Transverse colon (tissue), 4 donors: ENCODE measurements at regions of chr9 and their contacts with region 1.

Region 1: GRCh38 chr9:125558453-125559092 is 148.4 kb downstream of the MAPKAP1 start:
- DNase-seq: peak; percentile 63
- H3K4me3 ChIP-seq: no peak overlapping the region
- H3K27ac ChIP-seq: peak overlapping the region in 1 of 4 donors; percentile 33
- H3K4me1 ChIP-seq: peaks cover 0 to 6% (median 1%) of the 10 kb centered on the region in 4 donors
- H3K27me3 ChIP-seq: no peaks in the 10 kb centered on the region
- CTCF ChIP-seq: peak; percentile 69 to 84 (median 77)
- EP300 ChIP-seq: no peak
- POLR2A ChIP-seq: no peak

Region 2: GRCh38 chr9:124008694-124009530 is 1549.7 kb before region 1 on chr9:
- in situ Hi-C with region 1: no loop called
- intact Hi-C with region 1: no loop called
- DNase-seq: no peak
- H3K4me3 ChIP-seq: no peak overlapping the region
- H3K27ac ChIP-seq: no peak overlapping the region
- H3K4me1 ChIP-seq: peaks cover 9 to 44% (median 33%) of the 10 kb centered on the region in 4 donors
- H3K27me3 ChIP-seq: peaks cover 100% of the 10 kb centered on the region
- CTCF ChIP-seq: no peak
- EP300 ChIP-seq: no peak
- POLR2A ChIP-seq: no peak

Region 3: GRCh38 chr9:125631391-125632085 is 73.0 kb after region 1 on chr9:
- in situ Hi-C with region 1: loop called in 1 of 4 experiments (anchors 10 kb)
- intact Hi-C with region 1: no loop called
- DNase-seq: peak; percentile 20
- H3K4me3 ChIP-seq: no peak overlapping the region
- H3K27ac ChIP-seq: no peak overlapping the region
- H3K4me1 ChIP-seq: peaks cover 17 to 34% (median 24%) of the 10 kb centered on the region in 4 donors
- H3K27me3 ChIP-seq: no peaks in the 10 kb centered on the region
- CTCF ChIP-seq: peak; percentile 50 to 78 (median 60)
- EP300 ChIP-seq: no peak
- POLR2A ChIP-seq: no peak

Region 4: DNA sequence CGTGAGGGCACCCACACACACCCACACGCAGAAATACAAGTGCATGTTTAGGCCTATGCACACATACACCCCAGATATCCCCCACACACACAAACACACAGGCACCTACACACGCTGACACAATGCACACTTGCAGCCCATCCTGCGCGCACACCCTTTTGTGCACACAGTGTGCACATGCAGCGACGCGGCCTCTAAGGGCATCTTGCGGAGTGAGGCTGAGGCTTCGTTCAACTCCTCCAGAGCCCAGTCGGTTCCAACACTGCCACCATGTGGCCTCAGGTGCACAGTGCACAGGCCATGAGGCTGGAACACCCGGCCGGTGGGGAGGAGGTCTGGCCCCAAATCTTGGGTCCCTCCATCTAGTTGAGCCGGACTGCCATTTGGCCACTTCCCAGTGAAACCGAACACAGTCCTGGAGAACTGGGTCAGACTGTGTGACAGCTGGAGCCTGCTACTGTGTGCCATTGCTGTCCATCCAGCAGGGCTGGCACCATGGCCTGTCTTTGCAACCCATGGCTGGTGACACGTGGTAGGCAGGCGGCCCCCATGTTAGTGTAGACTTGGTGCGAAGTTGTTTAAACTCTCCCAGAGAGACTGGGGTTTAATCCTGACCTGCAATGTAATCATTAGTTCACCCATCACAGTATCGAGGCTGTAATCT is 670.3 kb after region 1 on chr9:
- in situ Hi-C with region 1: no loop called
- intact Hi-C with region 1: loop called (anchors 5 kb)
- DNase-seq: peak; percentile 69
- H3K4me3 ChIP-seq: no peak overlapping the region
- H3K27ac ChIP-seq: no peak overlapping the region
- H3K4me1 ChIP-seq: no peaks in the 10 kb centered on the region
- H3K27me3 ChIP-seq: peaks cover 42% of the 10 kb centered on the region
- CTCF ChIP-seq: peak; percentile 89 to 93 (median 92)
- EP300 ChIP-seq: no peak
- POLR2A ChIP-seq: no peak